Astrocyte of the cerebellum (primary cell): ENCODE measurements at regions of chr17 and their contacts with region 1.

Region 1: GRCh38 chr17:14737984-14738659 is 437.2 kb downstream of the HS3ST3B1 start:
- DNase-seq: peak; percentile 71
- H3K4me3 ChIP-seq: no peak overlapping the region
- CTCF ChIP-seq: peak; percentile 35

Region 2: GRCh38 chr17:14699574-14700180 is 38.4 kb before region 1 on chr17:
- in situ Hi-C with region 1: loop called (anchors 5 kb)
- DNase-seq: no peak
- H3K4me3 ChIP-seq: no peak overlapping the region
- CTCF ChIP-seq: no peak

Region 3: DNA sequence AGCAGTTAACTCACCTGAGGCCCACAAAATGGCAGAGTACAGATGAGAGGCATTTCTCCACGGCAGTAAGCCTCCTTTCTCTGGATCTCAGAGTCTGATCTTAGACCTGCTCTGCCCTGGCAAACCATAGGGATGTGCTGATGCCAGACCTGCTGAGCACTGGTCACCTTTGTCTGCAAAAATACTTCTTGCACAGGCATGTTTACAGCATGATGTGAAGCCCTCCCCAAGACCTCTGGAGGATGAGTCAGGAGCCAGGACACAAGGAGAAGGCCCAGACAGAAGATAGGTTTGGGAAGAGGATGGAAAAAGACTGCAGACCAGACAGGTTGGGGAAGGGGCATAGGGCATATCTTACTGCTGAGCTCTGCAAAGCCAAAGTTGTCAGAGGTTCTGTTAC is 100.4 kb after region 1 on chr17:
- in situ Hi-C with region 1: loop called (anchors 5 kb)
- DNase-seq: no peak
- H3K4me3 ChIP-seq: no peak overlapping the region
- CTCF ChIP-seq: no peak